Activated CD8-positive, alpha-beta memory T cell treated with anti-CD3 and anti-CD28 coated beads, Interleukin-2, amount 10 ng/mL, durations not matched to agents 7 days and 5 days (primary cell): ENCODE measurements at regions of chr7 and their contacts with region 1.

Region 1: DNA sequence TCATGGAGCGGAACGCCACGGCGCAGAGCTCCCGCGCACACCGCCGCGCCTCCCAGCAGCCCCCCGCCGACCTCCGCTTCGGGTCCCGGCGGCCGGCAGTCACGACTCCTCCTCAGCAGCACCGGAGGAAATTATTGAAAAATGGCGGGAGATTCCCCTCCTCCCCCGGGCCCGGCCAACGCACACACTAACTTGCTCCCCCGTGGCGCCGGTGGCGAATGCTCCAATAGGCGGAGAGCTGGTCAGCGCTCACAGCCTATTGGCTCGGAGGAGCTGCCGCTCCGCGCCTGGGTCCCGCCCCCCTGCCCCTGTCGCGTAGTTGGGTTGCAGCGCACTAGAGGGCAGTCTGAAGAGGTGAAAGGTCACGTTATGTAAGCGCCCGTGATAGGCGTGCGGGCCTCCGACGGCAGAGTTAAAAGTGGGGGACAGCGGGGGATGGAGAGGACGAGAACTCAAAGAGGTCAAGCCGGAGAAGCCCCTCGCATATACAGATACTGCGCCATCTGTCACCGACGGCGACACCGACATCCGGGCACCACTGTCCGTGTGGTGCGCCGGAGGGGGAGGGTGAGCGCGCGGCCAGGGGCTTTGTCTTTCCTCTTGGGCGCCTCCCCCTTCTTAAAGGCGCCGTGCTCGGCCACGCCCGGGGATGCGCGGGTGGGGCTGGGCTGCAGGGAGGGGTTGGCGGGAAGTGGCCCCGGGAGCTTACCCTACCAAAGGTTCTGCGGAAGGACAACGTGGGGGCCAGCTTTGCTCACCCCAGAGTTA is at the start of gene BAZ1B:
- DNase-seq: peak; percentile 99
- ATAC-seq: peak; percentile 93
- H3K4me3 Mint-ChIP-seq: peak within 1 kb of the TSS; percentile 99
- H3K27ac Mint-ChIP-seq: peak within 1 kb of the TSS; percentile 97
- H3K4me1 Mint-ChIP-seq: peaks cover 56% of the 10 kb centered on the region
- H3K27me3 Mint-ChIP-seq: no peaks in the 10 kb centered on the region
- total RNA-seq, gene BAZ1B: 112 to 129 TPM

Region 2: GRCh38 chr7:73501349-73501748 is 20.9 kb before region 1 on chr7:
- CTCF ChIA-PET with region 1: no interaction called
- DNase-seq: no peak
- ATAC-seq: no peak
- H3K4me3 Mint-ChIP-seq: no peak overlapping the region
- H3K27ac Mint-ChIP-seq: peak overlapping the region; percentile 48
- H3K4me1 Mint-ChIP-seq: peaks cover 9% of the 10 kb centered on the region
- H3K27me3 Mint-ChIP-seq: no peaks in the 10 kb centered on the region

Region 3: DNA sequence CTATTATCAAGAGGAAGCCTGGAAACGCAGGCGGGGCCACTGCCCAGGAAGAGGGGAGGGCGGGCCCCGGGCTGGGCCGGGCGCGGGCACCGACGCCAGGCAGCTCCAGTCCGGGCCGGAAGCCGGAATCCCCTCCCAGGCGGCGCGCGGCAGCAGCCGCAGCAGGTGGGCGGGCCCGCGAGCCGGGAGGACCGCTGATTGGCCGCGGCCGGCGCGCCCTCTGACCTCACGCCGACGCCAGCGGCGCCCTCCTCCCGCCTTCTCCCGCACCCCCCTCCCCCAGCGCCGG is 34.8 kb after region 1 on chr7:
- CTCF ChIA-PET with region 1: interaction called, 26 read pairs
- DNase-seq: peak; percentile 94
- ATAC-seq: peak; percentile 93
- H3K4me3 Mint-ChIP-seq: peak overlapping the region; percentile 97
- H3K27ac Mint-ChIP-seq: peak overlapping the region; percentile 92
- H3K4me1 Mint-ChIP-seq: peaks cover 41% of the 10 kb centered on the region
- H3K27me3 Mint-ChIP-seq: no peaks in the 10 kb centered on the region

Region 4: GRCh38 chr7:73738612-73739374 is 216.5 kb after region 1 on chr7 and contains the start of gene ABHD11:
- CTCF ChIA-PET with region 1: interaction called, 13 read pairs
- DNase-seq: peak; percentile 98
- ATAC-seq: peak; percentile 83
- H3K4me3 Mint-ChIP-seq: peak within 1 kb of the TSS; percentile 84
- H3K27ac Mint-ChIP-seq: peak within 1 kb of the TSS; percentile 95
- H3K4me1 Mint-ChIP-seq: peaks cover 21% of the 10 kb centered on the region
- H3K27me3 Mint-ChIP-seq: no peaks in the 10 kb centered on the region
- total RNA-seq, gene ABHD11: 15.9 to 19.2 TPM